ENCODE measurements at regions of chr19 and their contacts with region 1.

Region 1: GRCh38 chr19:4723367-4724187 is at the start of gene DPP9:
- DNase-seq: peak; percentile 98
- H3K4me3 Mint-ChIP-seq: peak within 1 kb of the TSS; percentile 91
- H3K27ac Mint-ChIP-seq: peak within 1 kb of the TSS; percentile 97
- H3K4me1 Mint-ChIP-seq: peaks cover 22% of the 10 kb centered on the region
- H3K27me3 Mint-ChIP-seq: peaks cover 3% of the 10 kb centered on the region
- total RNA-seq, gene DPP9: 40.8 to 41.9 TPM

Region 2: DNA sequence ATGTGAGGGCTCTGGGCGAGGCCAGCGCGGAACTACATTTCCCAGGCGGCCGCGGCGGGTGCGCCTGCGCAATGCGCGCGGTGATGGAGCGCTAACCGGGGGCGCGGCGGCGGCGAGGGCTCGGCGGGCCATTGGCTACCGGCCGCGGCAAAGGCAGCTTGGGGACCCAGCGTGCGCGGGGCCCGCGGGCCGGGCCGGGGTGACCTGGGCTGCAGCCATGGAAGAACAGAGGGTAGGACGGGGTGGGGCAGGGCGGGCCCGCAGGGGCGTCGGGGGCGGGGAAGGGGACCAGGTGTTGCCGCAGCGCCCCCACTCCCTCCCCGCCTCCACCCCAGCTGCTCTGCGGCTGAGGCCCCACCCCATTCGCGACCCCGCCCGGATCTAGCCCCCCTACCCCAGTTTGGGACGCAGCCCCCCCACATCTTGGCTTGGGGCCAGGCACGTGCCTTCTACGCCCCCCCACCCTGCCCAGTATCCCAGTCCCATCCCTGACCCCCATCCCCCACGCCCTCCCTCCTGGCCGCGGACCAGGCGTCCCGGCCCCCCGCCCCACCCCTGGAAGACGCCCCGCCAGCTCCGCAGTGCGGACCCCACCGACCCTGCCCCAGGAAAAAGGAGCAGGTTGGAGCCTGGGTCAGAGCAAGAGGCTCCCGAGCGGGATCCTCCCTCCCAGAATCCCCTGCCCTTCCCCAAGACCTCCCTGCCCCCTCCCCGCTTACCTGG is 418.9 kb before region 1 on chr19 and contains the start of gene FSD1:
- CTCF ChIA-PET with region 1: no interaction called
- intact Hi-C with region 1: loop called (anchors 5 kb)
- DNase-seq: peak; percentile 79
- H3K4me3 Mint-ChIP-seq: peak within 1 kb of the TSS; percentile 71
- H3K27ac Mint-ChIP-seq: peak within 1 kb of the TSS; percentile 84
- H3K4me1 Mint-ChIP-seq: peaks cover 34% of the 10 kb centered on the region
- H3K27me3 Mint-ChIP-seq: no peaks in the 10 kb centered on the region
- total RNA-seq, gene FSD1: 12.3 to 17.5 TPM

Region 3: GRCh38 chr19:4669723-4670480 is 53.7 kb before region 1 on chr19 and contains the start of gene MYDGF:
- CTCF ChIA-PET with region 1: no interaction called
- intact Hi-C with region 1: loop called (anchors 1 kb)
- DNase-seq: peak; percentile 94
- H3K4me3 Mint-ChIP-seq: peak within 1 kb of the TSS; percentile 86
- H3K27ac Mint-ChIP-seq: peak within 1 kb of the TSS; percentile 46
- H3K4me1 Mint-ChIP-seq: peaks cover 18% of the 10 kb centered on the region
- H3K27me3 Mint-ChIP-seq: no peaks in the 10 kb centered on the region
- total RNA-seq, gene MYDGF: 43.5 to 45.5 TPM

Region 4: DNA sequence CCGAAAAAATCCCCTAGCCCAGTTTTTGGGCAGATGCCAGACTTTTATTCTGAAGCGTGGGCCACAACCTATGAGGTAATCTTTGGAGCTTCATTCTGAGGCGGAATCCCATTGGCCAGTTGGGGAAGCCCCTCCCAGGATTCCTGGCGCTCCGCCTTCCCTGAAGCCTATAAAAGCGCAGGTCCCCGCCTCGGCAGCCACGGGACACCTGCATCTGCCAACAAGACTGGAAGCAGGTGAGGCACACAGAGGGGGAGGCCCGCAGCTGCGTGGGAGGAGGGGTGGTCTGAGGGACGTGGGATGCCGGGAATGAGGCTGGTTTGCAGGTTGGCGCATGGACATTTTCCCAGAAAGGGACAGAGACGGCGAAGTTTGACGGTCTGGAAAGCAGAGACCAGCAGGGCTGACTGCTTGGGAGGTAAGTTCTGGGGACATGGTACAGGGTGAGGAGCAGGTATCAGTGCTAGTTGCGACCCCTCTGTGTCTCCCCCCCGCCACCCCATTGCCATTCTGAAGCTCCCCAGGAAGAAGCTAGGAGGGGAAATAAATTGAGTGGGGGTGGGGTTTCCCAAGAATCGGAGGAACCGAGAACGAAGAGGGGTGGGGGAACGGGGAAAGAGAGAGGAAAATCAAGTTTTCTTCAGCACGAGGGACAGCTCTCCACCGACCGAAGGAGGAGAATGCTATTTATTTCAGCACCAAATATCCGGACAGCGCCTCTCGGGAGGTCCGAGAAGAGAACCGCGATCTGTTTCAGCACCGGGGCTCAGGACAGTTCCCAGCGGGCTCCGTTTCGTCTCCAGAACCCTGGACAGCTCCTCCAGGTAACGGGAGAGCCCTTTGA is 45.6 kb after region 1 on chr19:
- CTCF ChIA-PET with region 1: no interaction called
- intact Hi-C with region 1: loop called (anchors 1 kb)
- DNase-seq: peak; percentile 92
- H3K4me3 Mint-ChIP-seq: no peak overlapping the region
- H3K27ac Mint-ChIP-seq: no peak overlapping the region
- H3K4me1 Mint-ChIP-seq: no peaks in the 10 kb centered on the region
- H3K27me3 Mint-ChIP-seq: peaks cover 4% of the 10 kb centered on the region

Region 5: DNA sequence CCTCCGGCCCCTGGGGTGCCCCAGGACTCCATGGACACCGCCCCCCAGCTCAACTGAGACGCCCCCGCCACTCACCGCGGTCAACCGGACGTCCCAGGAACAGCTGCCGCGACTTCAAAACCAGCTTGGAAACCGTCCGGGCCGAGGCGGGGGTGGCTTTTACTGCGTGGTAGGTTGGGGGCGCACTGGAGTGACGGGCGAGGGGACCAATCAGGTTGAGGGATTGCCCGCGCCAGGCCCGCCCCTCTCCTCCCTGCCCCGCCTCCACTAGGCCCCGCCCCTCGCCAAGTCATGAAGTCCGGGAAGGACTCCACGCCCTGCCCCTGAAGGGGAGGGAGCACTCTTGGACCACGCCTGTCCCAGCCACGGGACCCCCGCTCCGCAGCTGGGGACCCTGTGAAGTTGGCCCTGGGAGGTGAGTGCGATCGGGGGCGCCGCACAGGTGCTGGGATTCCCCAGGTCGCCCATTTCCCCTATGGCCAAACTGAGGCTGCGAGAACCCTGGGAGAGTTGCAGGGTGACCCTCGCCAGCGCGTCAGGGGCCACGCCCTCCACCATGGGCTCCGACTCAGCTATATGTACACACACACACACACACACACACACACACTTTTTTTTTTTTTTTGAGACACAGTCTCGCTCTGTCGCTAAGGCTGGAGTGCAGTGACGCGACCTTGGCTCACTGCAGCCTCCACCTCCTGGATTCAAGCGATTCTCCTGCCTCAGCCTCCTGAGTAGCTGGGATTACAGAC is 144.1 kb after region 1 on chr19 and contains the start of gene PLIN3:
- CTCF ChIA-PET with region 1: no interaction called
- intact Hi-C with region 1: loop called (anchors 5 kb)
- DNase-seq: peak; percentile 97
- H3K4me3 Mint-ChIP-seq: peak within 1 kb of the TSS; percentile 74
- H3K27ac Mint-ChIP-seq: peak within 1 kb of the TSS; percentile 36
- H3K4me1 Mint-ChIP-seq: peaks cover 19% of the 10 kb centered on the region
- H3K27me3 Mint-ChIP-seq: peaks cover 3% of the 10 kb centered on the region
- total RNA-seq, gene PLIN3: 16.1 to 17.1 TPM

Region 6: DNA sequence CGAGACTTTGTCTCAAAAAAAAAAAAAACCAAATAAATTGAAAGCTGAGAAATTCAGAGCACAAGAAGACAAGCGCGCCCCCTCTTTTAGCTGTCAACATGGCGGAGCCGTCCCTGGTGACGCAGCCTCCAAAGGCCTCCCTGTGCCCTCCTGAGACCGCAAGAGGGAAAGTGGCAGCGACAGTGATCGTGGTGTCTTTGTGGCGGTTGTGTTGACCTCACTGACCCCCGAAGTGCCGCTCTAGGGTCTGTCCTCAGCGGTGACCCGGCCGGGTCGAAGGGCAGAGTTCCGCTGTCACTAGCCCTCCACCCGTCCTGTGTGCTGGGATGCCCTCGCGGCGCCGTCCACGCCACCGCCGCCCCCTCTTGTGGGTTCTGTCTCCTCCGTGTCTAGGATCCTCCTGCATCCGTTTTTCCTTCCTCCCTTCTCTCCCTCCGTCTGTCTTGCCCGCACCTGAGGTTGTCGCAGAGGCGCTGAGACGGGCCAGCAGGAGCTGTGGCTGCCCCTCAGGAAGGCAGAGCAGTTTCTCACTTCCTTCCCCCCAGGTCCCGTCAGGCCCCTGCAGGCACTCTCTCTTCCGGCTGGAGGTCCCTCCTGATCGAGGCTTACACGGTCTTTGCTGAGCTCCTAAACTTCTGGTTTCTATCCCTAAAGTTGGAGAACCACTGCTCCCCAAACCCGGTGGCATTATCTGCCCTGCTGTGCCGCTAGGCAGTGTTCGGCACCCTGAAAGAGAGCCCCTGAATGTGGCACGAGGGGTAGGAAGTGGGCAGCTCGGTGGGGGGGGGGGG is 192.9 kb after region 1 on chr19:
- CTCF ChIA-PET with region 1: no interaction called
- intact Hi-C with region 1: loop called (anchors 2 kb)
- DNase-seq: peak; percentile 55
- H3K4me3 Mint-ChIP-seq: peak overlapping the region; percentile 75
- H3K27ac Mint-ChIP-seq: peak overlapping the region; percentile 88
- H3K4me1 Mint-ChIP-seq: peaks cover 56% of the 10 kb centered on the region
- H3K27me3 Mint-ChIP-seq: no peaks in the 10 kb centered on the region

Region 7: GRCh38 chr19:5680437-5681368 is 957.1 kb after region 1 on chr19 and contains the starts of genes HSD11B1L and MICOS13:
- CTCF ChIA-PET with region 1: no interaction called
- intact Hi-C with region 1: loop called (anchors 1 kb)
- DNase-seq: peak; percentile 99
- H3K4me3 Mint-ChIP-seq: peak within 1 kb of the TSS; percentile 98
- H3K27ac Mint-ChIP-seq: peak within 1 kb of the TSS; percentile 91
- H3K4me1 Mint-ChIP-seq: peaks cover 20% of the 10 kb centered on the region
- H3K27me3 Mint-ChIP-seq: no peaks in the 10 kb centered on the region
- total RNA-seq, gene HSD11B1L: 2.6 to 3.0 TPM
- total RNA-seq, gene MICOS13: 43.3 to 44.8 TPM

Measured in activated naive CD4-positive, alpha-beta T cell treated with anti-CD3 and anti-CD28 coated beads for 36 hours (primary cell).